Natural killer cell (primary cell): ENCODE measurements at regions of chr20 and their contacts with region 1.

Region 1: DNA sequence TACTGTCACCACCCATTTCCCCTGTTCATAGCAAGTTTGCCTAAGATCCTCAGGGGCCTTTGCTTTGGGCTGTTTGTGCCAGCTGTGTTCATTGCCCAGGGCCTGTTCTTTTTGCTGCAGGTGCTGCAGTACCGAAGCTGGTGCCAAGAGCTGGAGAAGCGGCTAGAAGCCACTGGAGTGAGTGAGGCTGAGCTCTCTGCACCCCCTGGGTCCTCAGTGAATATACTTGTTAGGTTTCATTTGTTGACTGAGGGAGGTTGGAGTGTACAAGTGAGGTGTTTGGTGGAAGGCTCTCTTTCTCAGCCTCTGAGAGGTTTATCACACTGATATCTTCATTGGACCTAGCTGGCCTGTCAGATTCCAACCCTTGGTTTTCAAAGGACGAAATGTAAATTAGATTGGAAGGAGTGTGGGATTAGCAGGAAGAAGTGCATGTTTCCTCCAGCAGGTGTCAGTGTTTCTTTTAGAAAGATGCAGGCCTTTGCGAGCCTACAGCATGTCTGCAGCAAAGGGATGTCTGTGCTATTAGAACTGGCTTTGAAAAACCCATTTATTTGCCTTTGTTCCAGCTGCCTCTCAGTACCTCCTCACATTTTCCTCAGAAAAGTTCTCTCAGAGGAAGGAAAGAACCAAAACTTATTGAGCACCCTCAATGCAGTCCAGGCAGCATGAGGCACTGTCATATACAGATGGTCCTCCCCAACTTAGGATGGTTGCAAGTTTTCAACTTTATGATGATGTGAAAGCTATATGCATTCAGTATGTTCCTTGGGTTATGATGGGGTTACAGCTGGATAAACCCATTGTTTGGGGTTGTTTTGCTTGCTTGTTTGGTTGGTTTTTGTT is 8.3 kb downstream of the CEP250 start:
- DNase-seq: peak; percentile 25 to 82
- ATAC-seq: peak; percentile 84 to 98 (median 92)
- H3K4me3 ChIP-seq: no peak overlapping the region
- H3K4me3 Mint-ChIP-seq: no peak overlapping the region
- H3K27ac ChIP-seq: no peak overlapping the region
- H3K27ac Mint-ChIP-seq: peak overlapping the region in 1 of 2 donors; percentile 21
- H3K4me1 ChIP-seq: no peaks in the 10 kb centered on the region
- H3K4me1 Mint-ChIP-seq: peaks cover 0 to 16% of the 10 kb centered on the region in 2 donors
- H3K27me3 ChIP-seq: no peaks in the 10 kb centered on the region
- H3K27me3 Mint-ChIP-seq: no peaks in the 10 kb centered on the region
- CTCF ChIP-seq: peak; percentile 83

Region 2: DNA sequence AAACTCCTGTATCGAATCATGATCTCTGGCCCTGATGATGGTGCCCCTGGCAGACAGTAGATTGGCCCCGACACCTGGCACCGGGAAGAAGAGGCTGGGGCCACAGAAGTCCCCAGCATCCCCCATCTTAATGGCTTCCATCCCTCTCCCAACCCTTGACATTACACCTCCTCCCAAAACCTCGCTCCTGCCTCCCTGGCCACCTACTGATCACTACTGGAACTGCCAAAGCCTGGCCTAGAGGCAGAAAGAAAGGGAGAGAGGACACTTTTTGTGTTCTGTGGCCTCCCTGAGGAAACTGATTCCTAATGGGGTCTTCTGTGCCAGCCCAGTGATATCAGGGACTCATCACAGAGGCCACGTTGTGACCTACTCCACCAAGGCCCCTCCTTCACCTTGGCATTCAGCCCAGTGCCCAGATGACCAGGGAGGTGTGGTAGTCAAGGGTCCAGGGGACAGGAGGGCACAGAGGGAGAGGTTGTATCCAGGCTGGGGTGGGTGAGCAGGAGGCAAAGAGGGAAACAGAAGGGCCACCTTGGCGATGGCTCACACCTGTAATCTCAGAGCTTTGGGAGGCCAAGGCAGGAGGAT is 59.7 kb after region 1 on chr20:
- intact Hi-C with region 1: loop called (anchors 5 kb)
- DNase-seq: peak in 1 of 2 donors; percentile 47
- ATAC-seq: peak in 1 of 3 donors; percentile 58
- H3K4me3 ChIP-seq: no peak overlapping the region
- H3K4me3 Mint-ChIP-seq: no peak overlapping the region
- H3K27ac ChIP-seq: no peak overlapping the region
- H3K27ac Mint-ChIP-seq: no peak overlapping the region
- H3K4me1 ChIP-seq: no peaks in the 10 kb centered on the region
- H3K4me1 Mint-ChIP-seq: no peaks in the 10 kb centered on the region
- H3K27me3 ChIP-seq: no peaks in the 10 kb centered on the region
- H3K27me3 Mint-ChIP-seq: no peaks in the 10 kb centered on the region
- CTCF ChIP-seq: no peak